Endothelial cell of umbilical vein (primary cell): ENCODE measurements at regions of chr14 and their contacts with region 1.

Region 1: DNA sequence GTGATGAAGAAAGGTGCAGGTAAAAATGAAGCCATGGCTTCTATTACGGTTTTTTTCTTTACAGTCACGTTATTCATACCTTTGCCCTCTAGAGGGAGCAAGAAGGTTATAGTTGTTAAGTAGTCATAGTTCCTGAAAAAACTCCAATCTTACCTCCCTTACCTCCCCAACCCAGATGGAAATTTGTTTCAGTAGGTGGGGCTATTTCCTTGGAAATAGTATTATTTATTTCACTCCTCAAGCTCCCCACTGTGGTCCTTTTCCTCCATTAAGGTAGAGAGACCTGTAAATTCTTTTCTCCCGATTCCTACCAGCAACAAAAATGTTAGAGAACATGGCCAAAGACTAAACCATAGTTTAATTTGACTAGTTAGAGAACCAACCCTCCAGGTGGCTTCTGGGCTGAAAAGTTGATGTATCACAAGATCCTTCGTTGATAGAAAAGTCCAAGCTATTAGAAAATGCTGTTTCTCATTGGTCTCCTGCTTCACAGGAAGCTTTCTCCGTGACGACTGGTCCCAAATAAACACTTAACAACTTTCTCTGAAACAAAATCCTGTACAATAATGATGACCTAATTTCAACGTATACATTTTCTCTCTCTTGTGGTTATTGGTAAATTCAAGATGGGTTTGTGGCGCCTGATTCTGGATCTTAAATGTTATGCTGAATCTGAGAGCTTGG is 43.5 kb downstream of the TMX1 start:
- DNase-seq: peak; percentile 93
- H3K4me3 ChIP-seq: no peak overlapping the region
- H3K27ac ChIP-seq: no peak overlapping the region
- H3K4me1 ChIP-seq: no peaks in the 10 kb centered on the region
- H3K27me3 ChIP-seq: no peaks in the 10 kb centered on the region
- CTCF ChIP-seq: peak; percentile 64 to 67
- POLR2A ChIP-seq: no peak

Region 2: GRCh38 chr14:51219473-51220448 is 63.8 kb before region 1 on chr14:
- CTCF ChIA-PET with region 1: no interaction called
- POLR2A ChIA-PET with region 1: no interaction called
- dilution Hi-C with region 1: no loop called
- intact Hi-C with region 1: no loop called
- DNase-seq: peak; percentile 45
- H3K4me3 ChIP-seq: no peak overlapping the region
- H3K27ac ChIP-seq: no peak overlapping the region
- H3K4me1 ChIP-seq: no peaks in the 10 kb centered on the region
- H3K27me3 ChIP-seq: peaks cover 0 to 3% of the 10 kb centered on the region in 2 experiments
- CTCF ChIP-seq: peak; percentile 16 to 37
- POLR2A ChIP-seq: no peak

Region 3: DNA sequence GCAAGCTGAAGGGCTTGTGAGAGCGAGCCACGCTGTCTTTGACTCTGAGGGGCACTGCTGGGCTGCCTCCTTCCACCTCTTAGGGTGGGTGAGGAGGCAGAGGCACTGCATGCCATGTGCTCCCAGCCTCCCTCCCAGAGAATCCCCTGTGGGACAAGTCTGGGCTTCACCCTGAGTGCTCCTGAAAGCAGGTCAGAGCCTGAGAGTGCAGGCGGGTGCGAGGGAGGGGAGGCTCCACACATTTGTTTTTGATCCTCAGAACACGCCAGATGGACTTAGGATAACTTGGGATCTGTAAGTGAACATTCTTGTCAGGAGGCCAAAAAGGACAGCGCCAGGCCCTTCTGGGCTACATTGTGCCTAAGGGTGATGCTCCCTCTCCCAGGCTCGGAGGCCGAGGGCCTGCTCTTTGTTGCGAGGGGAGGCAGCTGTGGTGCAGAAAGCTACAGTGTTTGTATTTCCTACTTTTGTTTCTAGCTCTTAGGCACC is 111.9 kb after region 1 on chr14:
- CTCF ChIA-PET with region 1: interaction called, 14 read pairs
- POLR2A ChIA-PET with region 1: no interaction called
- dilution Hi-C with region 1: no loop called
- intact Hi-C with region 1: loop called (anchors 1 kb)
- DNase-seq: peak; percentile 91
- H3K4me3 ChIP-seq: peak overlapping the region in 1 of 3 experiments; percentile 26
- H3K27ac ChIP-seq: peak overlapping the region; percentile 99
- H3K4me1 ChIP-seq: peaks cover 52% of the 10 kb centered on the region
- H3K27me3 ChIP-seq: no peaks in the 10 kb centered on the region
- CTCF ChIP-seq: no peak
- POLR2A ChIP-seq: no peak

Region 4: GRCh38 chr14:51547260-51547659 is 263.7 kb after region 1 on chr14:
- CTCF ChIA-PET with region 1: interaction called, 9 read pairs
- POLR2A ChIA-PET with region 1: no interaction called
- dilution Hi-C with region 1: no loop called
- intact Hi-C with region 1: loop called (anchors 10 kb)
- DNase-seq: peak; percentile 99
- H3K4me3 ChIP-seq: no peak overlapping the region
- H3K27ac ChIP-seq: peak overlapping the region; percentile 96
- H3K4me1 ChIP-seq: peaks cover 32% of the 10 kb centered on the region
- H3K27me3 ChIP-seq: no peaks in the 10 kb centered on the region
- CTCF ChIP-seq: no peak
- POLR2A ChIP-seq: peak; percentile 80

Region 5: GRCh38 chr14:51750542-51750941 is 467.0 kb after region 1 on chr14:
- CTCF ChIA-PET with region 1: interaction called, 16 read pairs
- POLR2A ChIA-PET with region 1: no interaction called
- dilution Hi-C with region 1: no loop called
- intact Hi-C with region 1: loop called (anchors 1 kb)
- DNase-seq: no peak
- H3K4me3 ChIP-seq: no peak overlapping the region
- H3K27ac ChIP-seq: no peak overlapping the region
- H3K4me1 ChIP-seq: no peaks in the 10 kb centered on the region
- H3K27me3 ChIP-seq: no peaks in the 10 kb centered on the region
- CTCF ChIP-seq: no peak
- POLR2A ChIP-seq: no peak

Region 6: GRCh38 chr14:51979088-51979709 is 695.7 kb after region 1 on chr14:
- CTCF ChIA-PET with region 1: interaction called, 9 read pairs
- POLR2A ChIA-PET with region 1: no interaction called
- dilution Hi-C with region 1: no loop called
- intact Hi-C with region 1: loop called (anchors 1 kb)
- DNase-seq: peak; percentile 80
- H3K4me3 ChIP-seq: no peak overlapping the region
- H3K27ac ChIP-seq: no peak overlapping the region
- H3K4me1 ChIP-seq: no peaks in the 10 kb centered on the region
- H3K27me3 ChIP-seq: peaks cover 22 to 34% of the 10 kb centered on the region in 2 experiments
- CTCF ChIP-seq: peak; percentile 82 to 90
- POLR2A ChIP-seq: no peak